ENCODE measurements at regions of chr1 and their contacts with region 1.

Region 1: GRCh38 chr1:216566641-216567205 is 143.5 kb upstream of the USH2A start:
- DNase-seq: no peak
- H3K4me3 ChIP-seq: no peak overlapping the region
- H3K27ac ChIP-seq: no peak overlapping the region
- H3K4me1 ChIP-seq: no peaks in the 10 kb centered on the region
- H3K27me3 ChIP-seq: no peaks in the 10 kb centered on the region
- CTCF ChIP-seq: peak in 1 of 3 experiments; percentile 31; a peak in 2 of 4 replicates
- EP300 ChIP-seq: no peak
- POLR2A ChIP-seq: no peak
- RAD21 ChIP-seq: peak; percentile 23 to 36; a peak in 3 of 4 replicates

Region 2: DNA sequence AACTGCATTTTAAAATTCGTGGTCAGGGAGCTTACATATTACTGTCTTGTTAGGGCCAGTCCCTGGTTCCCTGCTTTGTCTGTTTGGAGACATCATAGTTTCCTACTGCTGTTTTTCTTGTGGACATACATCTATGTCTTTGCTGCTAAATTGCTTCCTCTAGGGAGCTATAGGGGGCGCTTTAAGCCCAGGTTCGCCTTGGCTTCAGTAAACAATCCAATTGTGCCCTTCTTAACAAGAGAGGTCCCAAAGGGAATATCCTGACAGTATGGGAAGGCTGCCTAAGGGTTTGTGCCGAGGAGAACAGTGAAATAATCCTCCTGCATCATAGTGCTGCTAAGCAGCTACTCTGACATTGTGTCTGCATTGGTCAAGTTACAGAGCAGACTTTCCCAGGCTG is 255.9 kb before region 1 on chr1:
- CTCF ChIA-PET with region 1: interaction called, 16 read pairs
- POLR2A ChIA-PET with region 1: no interaction called
- DNase-seq: peak; percentile 67 to 71
- H3K4me3 ChIP-seq: no peak overlapping the region
- H3K27ac ChIP-seq: no peak overlapping the region
- H3K4me1 ChIP-seq: no peaks in the 10 kb centered on the region
- H3K27me3 ChIP-seq: no peaks in the 10 kb centered on the region
- CTCF ChIP-seq: peak in 2 of 3 experiments; percentile 84 to 85; a peak in 3 of 4 replicates
- EP300 ChIP-seq: no peak
- POLR2A ChIP-seq: no peak
- RAD21 ChIP-seq: peak; percentile 91 to 96

Region 3: DNA sequence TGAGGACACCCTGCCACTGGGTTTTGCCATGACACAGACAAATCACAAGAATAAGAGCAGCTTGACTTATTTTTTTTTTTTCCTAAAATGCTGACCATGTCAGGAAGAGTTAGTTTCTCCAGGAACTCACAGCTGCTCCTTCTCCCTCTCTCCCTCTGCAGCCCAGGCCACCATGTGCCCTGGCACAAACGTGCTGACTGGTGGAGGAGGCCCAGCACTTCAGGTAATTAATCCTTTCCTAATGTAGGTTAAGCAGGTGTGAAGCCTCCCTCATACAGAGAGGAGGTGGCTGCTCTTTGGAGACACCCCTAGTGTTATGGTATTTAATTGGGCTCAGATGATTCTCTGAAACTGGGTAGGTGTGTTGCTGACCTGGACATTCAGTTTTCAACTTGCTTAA is 13.7 kb before region 1 on chr1:
- CTCF ChIA-PET with region 1: interaction called, 16 read pairs
- POLR2A ChIA-PET with region 1: no interaction called
- DNase-seq: no peak
- H3K4me3 ChIP-seq: no peak overlapping the region
- H3K27ac ChIP-seq: no peak overlapping the region
- H3K4me1 ChIP-seq: peaks cover 0 to 2% (median under 1%) of the 10 kb centered on the region in 4 experiments; a peak in 2 of 7 replicates
- H3K27me3 ChIP-seq: no peaks in the 10 kb centered on the region
- CTCF ChIP-seq: no peak
- EP300 ChIP-seq: no peak
- POLR2A ChIP-seq: no peak
- RAD21 ChIP-seq: peak in 1 of 2 experiments; percentile 15; a peak in 1 of 4 replicates

Region 4: DNA sequence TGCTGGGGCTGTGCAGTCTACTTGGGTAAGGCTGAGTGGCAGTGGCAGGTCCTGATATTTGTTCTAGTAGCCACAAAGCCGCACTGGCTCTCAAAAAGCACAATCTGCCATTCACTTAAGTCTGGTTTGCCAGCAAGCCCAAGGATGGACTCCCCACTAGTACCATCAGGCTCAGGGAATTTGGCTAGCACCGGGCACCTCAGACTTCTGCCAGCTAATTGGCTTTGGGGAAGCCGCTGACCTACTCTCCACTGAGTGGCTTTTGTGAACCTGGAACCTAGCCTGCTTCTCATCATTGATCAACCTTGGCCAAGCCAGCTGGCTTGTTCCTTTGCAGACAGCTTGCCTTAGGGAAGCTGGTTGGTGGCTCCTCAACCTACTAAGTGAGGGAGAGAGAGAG is 73.4 kb after region 1 on chr1:
- CTCF ChIA-PET with region 1: no interaction called
- POLR2A ChIA-PET with region 1: no interaction called
- DNase-seq: no peak
- H3K4me3 ChIP-seq: no peak overlapping the region
- H3K27ac ChIP-seq: no peak overlapping the region
- H3K4me1 ChIP-seq: no peaks in the 10 kb centered on the region
- H3K27me3 ChIP-seq: no peaks in the 10 kb centered on the region
- CTCF ChIP-seq: no peak
- EP300 ChIP-seq: no peak
- POLR2A ChIP-seq: no peak
- RAD21 ChIP-seq: no peak

Measured in H1 (cell line).